Activated CD4-positive, alpha-beta memory T cell treated with anti-CD3 and anti-CD28 coated beads, Interleukin-2, amount 10 ng/mL, durations not matched to agents 7 days and 5 days (primary cell): ENCODE measurements at regions of chrX and their contacts with region 1.

Region 1: GRCh38 chrX:12974796-12975669 is at the start of gene TMSB4X:
- DNase-seq: peak; percentile 88
- H3K4me3 Mint-ChIP-seq: peak within 1 kb of the TSS; percentile 89
- H3K27ac Mint-ChIP-seq: peak within 1 kb of the TSS; percentile 97
- H3K4me1 Mint-ChIP-seq: peaks cover 39% of the 10 kb centered on the region
- H3K27me3 Mint-ChIP-seq: no peaks in the 10 kb centered on the region
- total RNA-seq, gene TMSB4X: 10,813 to 11,021 TPM

Region 2: GRCh38 chrX:12946838-12947544 is 28.0 kb before region 1 on chrX:
- CTCF ChIA-PET with region 1: interaction called, 50 read pairs
- POLR2A ChIA-PET with region 1: interaction called, 1,343 read pairs
- DNase-seq: peak; percentile 78
- H3K4me3 Mint-ChIP-seq: peak overlapping the region; percentile 45
- H3K27ac Mint-ChIP-seq: peak overlapping the region; percentile 85
- H3K4me1 Mint-ChIP-seq: peaks cover 57% of the 10 kb centered on the region
- H3K27me3 Mint-ChIP-seq: no peaks in the 10 kb centered on the region

Region 3: DNA sequence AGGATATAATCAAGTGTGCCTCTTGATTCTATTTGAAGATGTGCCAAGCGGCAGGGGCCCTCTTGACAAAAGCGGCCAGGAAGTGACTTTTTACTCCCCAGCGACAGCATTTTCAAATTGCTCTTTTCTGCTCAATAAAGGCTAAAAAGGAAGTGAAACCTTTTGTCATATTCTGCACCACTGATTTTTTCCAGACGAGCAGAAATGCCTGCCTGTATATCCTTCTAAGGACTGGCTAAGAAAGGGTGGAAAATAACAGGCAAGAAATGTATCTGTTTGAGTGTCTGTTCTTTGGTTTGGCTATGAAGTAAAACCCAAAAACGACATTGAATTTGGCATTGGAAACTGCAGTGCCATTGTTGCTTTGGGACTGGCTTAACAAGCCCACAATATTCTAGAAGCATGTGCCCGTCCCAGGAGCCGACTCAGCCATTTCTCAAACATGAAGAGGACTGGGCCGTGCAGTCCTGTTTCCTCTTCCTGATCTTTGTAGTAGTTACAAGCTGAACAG is 25.3 kb after region 1 on chrX:
- CTCF ChIA-PET with region 1: interaction called, 37 read pairs
- POLR2A ChIA-PET with region 1: interaction called, 693 read pairs
- DNase-seq: peak; percentile 42
- H3K4me3 Mint-ChIP-seq: peak overlapping the region; percentile 73
- H3K27ac Mint-ChIP-seq: peak overlapping the region; percentile 94
- H3K4me1 Mint-ChIP-seq: peaks cover 78% of the 10 kb centered on the region
- H3K27me3 Mint-ChIP-seq: no peaks in the 10 kb centered on the region

Region 4: GRCh38 chrX:13024986-13025385 is 50.0 kb after region 1 on chrX:
- CTCF ChIA-PET with region 1: no interaction called
- POLR2A ChIA-PET with region 1: interaction called, 13 read pairs
- DNase-seq: no peak
- H3K4me3 Mint-ChIP-seq: no peak overlapping the region
- H3K27ac Mint-ChIP-seq: no peak overlapping the region
- H3K4me1 Mint-ChIP-seq: peaks cover 56% of the 10 kb centered on the region
- H3K27me3 Mint-ChIP-seq: no peaks in the 10 kb centered on the region

Region 5: GRCh38 chrX:13078739-13079444 is 103.9 kb after region 1 on chrX:
- CTCF ChIA-PET with region 1: interaction called, 210 read pairs
- POLR2A ChIA-PET with region 1: interaction called, 1,502 read pairs
- DNase-seq: no peak
- H3K4me3 Mint-ChIP-seq: peak overlapping the region; percentile 61
- H3K27ac Mint-ChIP-seq: peak overlapping the region; percentile 78
- H3K4me1 Mint-ChIP-seq: peaks cover 90% of the 10 kb centered on the region
- H3K27me3 Mint-ChIP-seq: no peaks in the 10 kb centered on the region

Region 6: DNA sequence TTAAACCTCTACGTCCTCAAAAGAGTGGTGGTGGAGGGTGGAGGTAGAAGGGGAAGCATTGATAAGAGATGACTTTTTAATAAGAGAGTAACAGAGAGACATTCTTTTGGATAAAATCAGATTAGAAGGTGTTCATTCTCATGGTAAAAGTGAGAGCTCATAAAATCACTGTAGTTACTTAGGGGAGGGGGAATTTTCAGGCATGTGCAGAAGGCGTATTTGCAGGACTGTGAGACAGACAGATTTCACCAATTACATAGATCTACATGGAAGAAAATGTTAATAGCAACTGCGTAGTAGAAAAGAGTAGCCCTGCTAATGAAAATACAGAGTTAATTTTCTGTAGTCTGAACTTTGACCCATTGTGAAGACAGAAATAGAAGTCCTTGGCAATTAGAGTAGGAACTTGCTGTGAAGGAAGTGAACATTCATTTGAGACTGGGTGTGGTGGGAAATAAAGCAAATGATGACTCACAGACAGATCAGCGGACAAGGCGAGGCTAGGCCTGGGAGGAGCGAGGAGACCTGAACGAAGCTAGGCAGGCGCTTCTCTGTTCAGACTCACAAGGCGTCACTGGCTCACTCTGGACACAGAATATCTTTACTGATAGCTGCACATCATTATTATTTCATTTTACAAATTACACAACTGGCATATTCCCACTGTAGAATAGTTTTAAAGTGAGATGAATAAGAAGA is 126.6 kb after region 1 on chrX:
- CTCF ChIA-PET with region 1: interaction called, 3 read pairs
- POLR2A ChIA-PET with region 1: interaction called, 1,502 read pairs
- DNase-seq: peak; percentile 66
- H3K4me3 Mint-ChIP-seq: no peak overlapping the region
- H3K27ac Mint-ChIP-seq: peak overlapping the region; percentile 76
- H3K4me1 Mint-ChIP-seq: peaks cover 62% of the 10 kb centered on the region
- H3K27me3 Mint-ChIP-seq: no peaks in the 10 kb centered on the region